Heart right ventricle (tissue), 16 donors: ENCODE measurements at regions of chr1 and their contacts with region 1.

Region 1: GRCh38 chr1:24822887-24823286 is 77.6 kb downstream of the CLIC4 start:
- DNase-seq: no peak
- ATAC-seq: no peak
- H3K4me3 ChIP-seq: no peak overlapping the region
- H3K27ac ChIP-seq: peak overlapping the region in 3 of 10 donors; percentile 1 to 44 (median 25)
- H3K4me1 ChIP-seq: peaks cover 0 to 58% (median 52%) of the 10 kb centered on the region in 9 donors
- H3K27me3 ChIP-seq: no peaks in the 10 kb centered on the region
- CTCF ChIP-seq: no peak

Region 2: GRCh38 chr1:24754229-24754628 is 68.7 kb before region 1 on chr1:
- intact Hi-C with region 1: loop called in 6 of 10 experiments (anchors 5 to 10 kb)
- DNase-seq: no peak
- ATAC-seq: peak; percentile 32 to 70 (median 55)
- H3K4me3 ChIP-seq: no peak overlapping the region
- H3K27ac ChIP-seq: peak overlapping the region in 7 of 10 donors; percentile 23 to 96 (median 53)
- H3K4me1 ChIP-seq: peaks cover 7 to 79% (median 64%) of the 10 kb centered on the region in 9 donors
- H3K27me3 ChIP-seq: no peaks in the 10 kb centered on the region
- CTCF ChIP-seq: no peak